AG04449 (cell line): ENCODE measurements at regions of chr3 and their contacts with region 1.

Region 1: DNA sequence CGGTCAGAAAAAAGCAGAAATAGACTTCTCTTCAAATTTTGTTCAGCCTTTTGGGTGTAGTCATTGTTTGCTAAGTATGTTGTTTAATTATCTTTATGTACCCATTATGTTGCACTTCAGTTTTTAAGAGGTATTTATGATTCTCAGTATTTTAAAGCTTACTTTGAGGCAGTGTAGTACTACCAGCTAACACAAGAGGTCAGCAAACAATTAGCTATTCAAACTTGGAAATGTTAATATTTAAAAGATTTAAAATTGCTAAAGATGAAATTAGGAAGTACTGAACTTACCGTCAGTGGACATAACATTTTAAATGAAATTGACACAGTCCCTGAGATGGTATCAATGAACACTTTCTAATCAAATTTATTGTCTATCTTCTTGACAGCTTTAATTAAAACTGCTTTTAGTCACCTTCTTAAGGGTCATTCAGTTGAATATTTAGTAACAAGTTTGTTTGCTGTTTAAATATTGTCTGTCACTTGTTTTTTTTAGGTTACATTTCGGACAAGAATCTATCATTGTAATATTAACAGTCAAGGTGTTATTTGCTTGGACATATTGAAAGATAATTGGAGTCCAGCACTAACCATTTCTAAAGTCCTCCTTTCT is 28.1 kb downstream of the NKIRAS1 start:
- DNase-seq: no peak
- H3K4me3 ChIP-seq: no peak overlapping the region
- CTCF ChIP-seq: peak; percentile 53

Region 2: DNA sequence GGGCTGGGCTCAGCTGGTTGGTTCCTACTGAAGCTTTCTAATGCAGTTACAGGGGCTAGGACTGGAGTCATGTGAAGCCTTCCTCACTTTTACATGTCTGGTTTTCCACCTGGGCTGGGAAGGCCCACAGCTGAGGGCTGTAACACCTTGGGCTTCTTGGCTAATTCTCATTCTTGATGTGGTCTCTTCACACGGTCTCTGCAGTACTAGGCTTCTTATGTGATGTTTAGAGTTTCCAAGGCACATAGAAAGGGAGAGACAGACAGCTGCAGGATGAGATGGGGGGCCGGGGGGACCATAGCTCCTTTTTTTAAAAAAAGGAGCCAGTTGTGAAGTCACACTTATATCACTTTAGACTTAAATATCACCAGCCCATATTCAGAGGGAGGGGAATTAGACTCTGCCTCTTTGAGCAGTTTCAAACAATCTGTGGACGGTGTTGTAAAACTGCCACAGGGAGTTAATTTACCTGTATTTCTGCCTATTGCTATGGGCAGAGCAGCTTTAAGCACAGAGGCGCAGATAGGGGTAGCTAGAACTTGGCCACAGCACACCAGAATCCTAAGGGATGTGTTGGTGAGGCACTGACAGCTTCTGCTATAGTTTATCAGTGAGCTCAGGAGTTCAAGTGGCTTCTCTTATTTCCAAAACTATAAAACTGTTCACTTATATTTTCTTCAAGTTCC is 18.6 kb before region 1 on chr3:
- CTCF ChIA-PET with region 1: interaction called, 10 read pairs
- POLR2A ChIA-PET with region 1: no interaction called
- DNase-seq: no peak
- H3K4me3 ChIP-seq: no peak overlapping the region
- CTCF ChIP-seq: no peak

Region 3: GRCh38 chr3:23877329-23877980 is 11.3 kb before region 1 on chr3:
- CTCF ChIA-PET with region 1: interaction called, 15 read pairs
- POLR2A ChIA-PET with region 1: no interaction called
- DNase-seq: peak; percentile 74
- H3K4me3 ChIP-seq: no peak overlapping the region
- CTCF ChIP-seq: no peak

Region 4: DNA sequence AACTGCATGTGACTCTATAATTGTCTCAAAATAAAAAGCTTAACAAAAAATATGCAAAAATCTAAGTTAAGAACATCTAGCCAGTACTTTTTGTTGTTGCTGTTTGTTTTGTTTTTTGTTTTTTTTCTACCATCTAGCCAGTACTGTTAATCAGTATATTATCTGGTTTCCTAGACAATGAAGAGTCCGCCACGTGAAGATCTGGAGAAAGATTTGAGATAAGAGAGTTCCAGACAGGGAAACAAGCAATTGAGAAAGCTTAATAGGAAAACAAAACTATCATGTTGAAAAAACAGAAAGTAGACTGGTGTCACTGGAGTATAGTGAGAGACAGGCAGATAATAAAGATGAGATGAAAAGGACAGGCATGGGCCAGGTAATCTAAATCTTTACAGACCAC is 10.6 kb after region 1 on chr3:
- CTCF ChIA-PET with region 1: interaction called, 21 read pairs
- POLR2A ChIA-PET with region 1: no interaction called
- DNase-seq: no peak
- H3K4me3 ChIP-seq: no peak overlapping the region
- CTCF ChIP-seq: no peak

Region 5: DNA sequence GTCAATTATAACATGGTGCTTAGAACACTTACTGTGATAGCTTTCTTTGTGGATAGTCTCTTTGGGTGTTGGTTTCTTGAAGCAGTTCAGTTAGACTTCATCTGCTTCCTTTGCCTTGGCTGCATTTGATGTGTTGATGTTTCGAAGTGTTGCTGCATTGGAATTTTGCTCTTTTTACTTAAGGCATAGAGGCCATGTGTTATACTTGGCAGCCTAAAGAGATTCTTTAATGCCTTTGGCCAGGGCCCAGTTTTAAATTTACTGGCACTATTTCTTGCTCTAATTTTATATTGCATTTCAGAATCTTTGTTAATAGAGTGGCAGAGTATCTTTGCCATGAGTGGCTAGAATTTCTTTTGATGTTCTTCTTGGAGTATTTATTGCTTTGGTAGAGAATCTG is 77.6 kb after region 1 on chr3:
- CTCF ChIA-PET with region 1: interaction called, 10 read pairs
- POLR2A ChIA-PET with region 1: no interaction called
- DNase-seq: peak; percentile 82
- H3K4me3 ChIP-seq: no peak overlapping the region
- CTCF ChIP-seq: no peak

Region 6: GRCh38 chr3:23999012-23999641 is 110.4 kb after region 1 on chr3:
- CTCF ChIA-PET with region 1: interaction called, 70 read pairs
- POLR2A ChIA-PET with region 1: no interaction called
- DNase-seq: no peak
- H3K4me3 ChIP-seq: no peak overlapping the region
- CTCF ChIP-seq: peak; percentile 83

Region 7: DNA sequence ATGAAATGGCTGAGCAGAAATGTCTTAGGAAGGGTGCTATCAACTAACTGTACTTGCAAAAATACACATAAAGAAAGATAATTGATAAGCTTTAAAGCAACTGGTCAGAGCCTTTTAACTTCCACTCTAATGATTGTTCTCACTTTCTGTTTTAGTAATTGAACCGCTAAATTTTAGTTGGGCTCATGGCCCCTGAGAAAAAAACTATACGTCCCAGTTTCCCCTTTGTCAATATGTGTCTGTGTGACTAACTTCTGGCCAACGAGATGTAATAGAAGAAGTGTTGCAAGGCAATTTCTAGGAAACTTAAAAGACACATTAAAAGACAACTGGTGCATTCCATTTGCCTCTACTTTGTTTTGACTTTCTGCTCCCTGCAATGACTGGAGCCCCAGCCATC is 280.3 kb after region 1 on chr3:
- CTCF ChIA-PET with region 1: no interaction called
- POLR2A ChIA-PET with region 1: no interaction called
- DNase-seq: no peak
- H3K4me3 ChIP-seq: no peak overlapping the region
- CTCF ChIP-seq: no peak